Adrenal gland (tissue), 19 donors: ENCODE measurements at regions of chr17 and their contacts with region 1.

Region 1: GRCh38 chr17:47840740-47841603 is at the start of gene SCRN2:
- DNase-seq: peak; percentile 86 to 96 (median 90)
- H3K4me3 ChIP-seq: peak within 1 kb of the TSS; percentile 28 to 78 (median 58)
- H3K27ac ChIP-seq: peak within 1 kb of the TSS in 2 of 5 donors; percentile 27 to 70
- H3K4me1 ChIP-seq: peaks cover 9 to 13% of the 10 kb centered on the region in 2 donors
- H3K27me3 ChIP-seq: no peaks in the 10 kb centered on the region
- CTCF ChIP-seq: peak; percentile 88 to 99 (median 97)
- POLR2A ChIP-seq: no peak
- total RNA-seq, gene SCRN2: 18.3 to 53.7 (median 38.4) TPM

Region 2: DNA sequence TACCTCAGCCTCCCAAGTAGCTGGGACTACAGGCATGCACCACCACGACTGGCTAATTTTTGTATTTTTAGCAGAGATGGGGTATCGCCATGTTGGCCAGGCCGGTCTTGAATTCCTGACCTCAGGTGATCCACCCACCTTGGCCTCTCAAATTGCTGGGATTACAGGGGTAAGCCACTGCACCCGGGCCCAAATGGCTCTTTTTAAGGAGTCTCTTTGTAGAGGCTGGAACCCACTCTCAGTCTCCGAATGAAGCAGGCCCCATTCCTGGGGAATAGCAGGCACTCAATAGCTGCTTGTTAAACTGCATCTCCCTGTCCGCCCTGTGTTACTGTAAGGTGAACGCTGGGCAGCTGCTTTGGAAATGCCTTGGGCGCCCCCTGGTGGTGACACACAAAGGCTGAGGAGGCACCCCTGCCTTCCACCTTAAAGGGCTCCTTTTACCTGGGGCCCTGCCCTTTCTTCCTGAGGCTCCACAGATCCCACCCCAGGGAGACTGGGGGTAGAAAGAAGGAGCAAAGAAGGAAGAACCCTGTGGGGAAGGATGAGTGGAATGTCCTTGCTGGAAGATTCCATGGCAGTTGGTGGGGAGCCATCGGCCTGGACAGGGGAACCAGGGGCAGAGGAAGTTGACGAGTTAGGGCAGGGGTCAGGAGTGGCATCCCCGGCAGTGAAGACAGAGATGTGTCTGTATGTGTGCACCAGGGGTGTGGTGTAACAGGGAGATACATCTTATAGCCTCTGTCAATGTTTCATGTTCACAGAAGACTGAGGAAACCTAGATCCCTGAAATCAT is 49.0 kb after region 1 on chr17:
- intact Hi-C with region 1: loop called (anchors 2 kb)
- DNase-seq: peak; percentile 85 to 95 (median 91)
- H3K4me3 ChIP-seq: no peak overlapping the region
- H3K27ac ChIP-seq: no peak overlapping the region
- H3K4me1 ChIP-seq: peaks cover 5 to 13% of the 10 kb centered on the region in 2 donors
- H3K27me3 ChIP-seq: no peaks in the 10 kb centered on the region
- CTCF ChIP-seq: peak; percentile 95 to 98 (median 97)
- POLR2A ChIP-seq: no peak

Region 3: GRCh38 chr17:47957591-47958428 is 116.8 kb after region 1 on chr17 and contains the start of gene PRR15L:
- intact Hi-C with region 1: loop called in 1 of 2 experiments (anchors 5 kb)
- DNase-seq: no peak
- H3K4me3 ChIP-seq: no peak within 1 kb of the TSS
- H3K27ac ChIP-seq: no peak within 1 kb of the TSS
- H3K4me1 ChIP-seq: no peaks in the 10 kb centered on the region
- H3K27me3 ChIP-seq: no peaks in the 10 kb centered on the region
- CTCF ChIP-seq: no peak
- POLR2A ChIP-seq: no peak
- total RNA-seq, gene PRR15L: 0.19 TPM in 1 of 9 donors, not detected in the others

Region 4: GRCh38 chr17:47970704-47971463 is 129.9 kb after region 1 on chr17 and contains the start of gene CDK5RAP3:
- intact Hi-C with region 1: loop called in 1 of 2 experiments (anchors 5 kb)
- DNase-seq: peak; percentile 100
- H3K4me3 ChIP-seq: peak within 1 kb of the TSS; percentile 49 to 92 (median 82)
- H3K27ac ChIP-seq: peak within 1 kb of the TSS in 4 of 5 donors; percentile 48 to 88 (median 60)
- H3K4me1 ChIP-seq: peaks cover 7 to 20% of the 10 kb centered on the region in 2 donors
- H3K27me3 ChIP-seq: no peaks in the 10 kb centered on the region
- CTCF ChIP-seq: peak; percentile 83 to 99 (median 94)
- POLR2A ChIP-seq: peak in 1 of 2 donors; percentile 80
- total RNA-seq, gene CDK5RAP3: 42.8 to 200 (median 100) TPM

Region 5: DNA sequence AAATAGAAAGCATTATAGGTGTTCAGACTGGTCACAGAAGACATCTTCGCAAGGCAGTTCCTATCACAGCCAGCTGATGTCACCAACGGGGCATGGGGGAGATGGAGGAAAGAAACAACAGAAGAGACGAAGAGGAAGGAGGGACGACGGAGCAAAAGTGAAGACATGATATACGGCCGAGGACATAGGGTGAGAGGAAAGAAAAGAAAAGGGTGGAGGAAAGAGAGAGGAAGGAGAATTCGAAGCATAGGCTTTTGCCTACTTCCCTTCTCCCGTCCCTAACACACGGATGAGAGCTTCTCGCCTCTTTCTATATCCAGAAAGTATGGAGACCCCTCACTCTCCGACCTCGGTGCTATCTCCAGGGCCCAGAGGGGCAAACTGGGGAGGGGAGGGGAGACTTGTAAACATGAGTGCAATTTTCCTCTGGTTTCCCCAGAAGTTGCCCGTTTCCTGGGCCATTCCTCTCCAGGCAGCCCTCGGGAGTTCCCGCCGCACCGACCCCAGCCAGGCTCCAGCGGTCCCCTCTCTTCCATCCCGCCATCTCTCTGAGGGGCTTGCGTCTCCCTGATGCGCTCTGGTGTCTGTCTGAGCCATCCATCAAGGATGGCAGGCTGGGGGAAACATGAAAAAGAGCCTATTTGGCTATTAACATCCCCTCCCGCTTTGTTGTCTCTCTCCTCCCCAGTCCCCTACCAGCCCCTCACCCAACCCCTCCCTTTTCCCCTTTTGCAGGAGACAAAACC is 170.6 kb after region 1 on chr17:
- intact Hi-C with region 1: loop called in 1 of 2 experiments (anchors 5 kb)
- DNase-seq: peak in 3 of 7 donors; percentile 43 to 76 (median 47)
- H3K4me3 ChIP-seq: peak overlapping the region in 1 of 4 donors; percentile 38
- H3K27ac ChIP-seq: peak overlapping the region in 1 of 5 donors; percentile 60
- H3K4me1 ChIP-seq: peaks cover 4 to 6% of the 10 kb centered on the region in 2 donors
- H3K27me3 ChIP-seq: peaks cover 3% of the 10 kb centered on the region
- CTCF ChIP-seq: peak; percentile 11 to 45 (median 34)
- POLR2A ChIP-seq: no peak